Activated CD4-positive, alpha-beta T cell treated with anti-CD3 and anti-CD28 coated beads for 36 hours (primary cell): ENCODE measurements at regions of chr2 and their contacts with region 1.

Region 1: GRCh38 chr2:181104512-181105115 is 124.2 kb downstream of the UBE2E3 start:
- DNase-seq: no peak
- ATAC-seq: no peak
- H3K4me3 Mint-ChIP-seq: peak overlapping the region; percentile 2
- H3K27ac Mint-ChIP-seq: no peak overlapping the region
- H3K4me1 Mint-ChIP-seq: peaks cover 45% of the 10 kb centered on the region
- H3K27me3 Mint-ChIP-seq: no peaks in the 10 kb centered on the region

Region 2: DNA sequence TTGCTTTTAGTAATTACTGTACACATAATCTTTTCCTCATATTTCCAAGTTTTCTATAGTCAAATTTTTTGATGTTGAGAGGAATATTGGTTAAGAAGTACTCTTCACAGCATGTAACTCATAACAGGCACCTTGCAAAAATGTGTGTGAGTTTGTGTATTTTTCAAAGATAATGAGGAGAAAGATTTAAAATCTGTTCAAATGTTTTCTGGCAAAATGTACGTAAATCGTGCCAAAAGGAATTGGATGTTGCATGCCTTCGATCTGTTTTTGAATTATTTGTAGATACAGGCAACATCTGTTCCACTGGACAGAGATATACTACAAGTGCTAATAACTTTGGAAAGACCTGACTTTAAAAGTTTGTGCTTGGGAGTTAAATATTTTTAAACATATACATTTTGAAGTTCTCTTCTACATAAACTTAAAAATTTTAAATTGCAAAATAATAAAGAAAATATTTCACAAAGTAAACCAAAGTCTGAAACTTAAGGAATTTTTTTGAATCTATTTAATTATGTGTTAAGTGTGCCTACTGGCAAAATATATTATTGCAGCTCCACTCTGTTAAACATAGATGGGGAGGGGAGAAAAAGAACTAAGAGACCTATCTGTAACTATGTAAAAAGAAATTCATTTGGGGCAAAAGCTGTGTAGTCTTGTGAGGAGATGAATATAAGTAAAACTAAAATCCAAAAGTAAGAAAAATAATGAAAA is 257.7 kb before region 1 on chr2:
- CTCF ChIA-PET with region 1: no interaction called
- POLR2A ChIA-PET with region 1: no interaction called
- intact Hi-C with region 1: no loop called
- DNase-seq: no peak
- ATAC-seq: no peak
- H3K4me3 Mint-ChIP-seq: no peak overlapping the region
- H3K27ac Mint-ChIP-seq: no peak overlapping the region
- H3K4me1 Mint-ChIP-seq: no peaks in the 10 kb centered on the region
- H3K27me3 Mint-ChIP-seq: no peaks in the 10 kb centered on the region

Region 3: DNA sequence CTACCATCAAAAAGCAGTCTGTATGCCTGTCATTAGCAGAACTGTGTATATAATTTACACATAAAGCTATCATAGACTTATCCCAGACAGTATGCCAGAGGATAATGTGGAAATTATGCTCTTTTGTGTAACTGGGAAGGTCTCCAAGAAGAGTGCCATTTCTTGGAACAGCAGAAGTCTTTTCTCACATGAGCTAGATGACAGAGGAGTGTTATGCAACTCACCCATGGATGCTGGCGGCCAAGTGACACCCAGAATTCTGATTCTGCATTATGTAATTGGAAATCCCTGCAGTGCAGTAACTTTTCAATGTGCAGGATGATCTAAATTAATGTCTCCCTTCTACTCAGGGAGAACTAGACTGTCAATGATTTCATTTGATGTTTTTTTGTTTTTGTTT is 35.8 kb after region 1 on chr2:
- CTCF ChIA-PET with region 1: interaction called, 5 read pairs
- POLR2A ChIA-PET with region 1: no interaction called
- intact Hi-C with region 1: loop called (anchors 1 to 2 kb)
- DNase-seq: no peak
- ATAC-seq: no peak
- H3K4me3 Mint-ChIP-seq: peak overlapping the region; percentile 64
- H3K27ac Mint-ChIP-seq: no peak overlapping the region
- H3K4me1 Mint-ChIP-seq: peaks cover 58% of the 10 kb centered on the region
- H3K27me3 Mint-ChIP-seq: no peaks in the 10 kb centered on the region

Region 4: GRCh38 chr2:181223234-181223633 is 118.6 kb after region 1 on chr2:
- CTCF ChIA-PET with region 1: interaction called, 5 read pairs
- POLR2A ChIA-PET with region 1: no interaction called
- intact Hi-C with region 1: loop called (anchors 1 to 2 kb)
- DNase-seq: no peak
- ATAC-seq: peak; percentile 42
- H3K4me3 Mint-ChIP-seq: no peak overlapping the region
- H3K27ac Mint-ChIP-seq: peak overlapping the region; percentile 79
- H3K4me1 Mint-ChIP-seq: peaks cover 19% of the 10 kb centered on the region
- H3K27me3 Mint-ChIP-seq: no peaks in the 10 kb centered on the region

Region 5: GRCh38 chr2:181457121-181457740 is 352.6 kb after region 1 on chr2 and contains the start of gene ITGA4:
- CTCF ChIA-PET with region 1: interaction called, 5 read pairs
- POLR2A ChIA-PET with region 1: interaction called, 3 read pairs
- intact Hi-C with region 1: loop called (anchors 1 to 2 kb)
- DNase-seq: peak; percentile 93
- ATAC-seq: peak; percentile 86
- H3K4me3 Mint-ChIP-seq: peak within 1 kb of the TSS; percentile 91
- H3K27ac Mint-ChIP-seq: peak within 1 kb of the TSS; percentile 95
- H3K4me1 Mint-ChIP-seq: peaks cover 53% of the 10 kb centered on the region
- H3K27me3 Mint-ChIP-seq: no peaks in the 10 kb centered on the region
- total RNA-seq, gene ITGA4: 27.7 to 33.6 TPM

Region 6: DNA sequence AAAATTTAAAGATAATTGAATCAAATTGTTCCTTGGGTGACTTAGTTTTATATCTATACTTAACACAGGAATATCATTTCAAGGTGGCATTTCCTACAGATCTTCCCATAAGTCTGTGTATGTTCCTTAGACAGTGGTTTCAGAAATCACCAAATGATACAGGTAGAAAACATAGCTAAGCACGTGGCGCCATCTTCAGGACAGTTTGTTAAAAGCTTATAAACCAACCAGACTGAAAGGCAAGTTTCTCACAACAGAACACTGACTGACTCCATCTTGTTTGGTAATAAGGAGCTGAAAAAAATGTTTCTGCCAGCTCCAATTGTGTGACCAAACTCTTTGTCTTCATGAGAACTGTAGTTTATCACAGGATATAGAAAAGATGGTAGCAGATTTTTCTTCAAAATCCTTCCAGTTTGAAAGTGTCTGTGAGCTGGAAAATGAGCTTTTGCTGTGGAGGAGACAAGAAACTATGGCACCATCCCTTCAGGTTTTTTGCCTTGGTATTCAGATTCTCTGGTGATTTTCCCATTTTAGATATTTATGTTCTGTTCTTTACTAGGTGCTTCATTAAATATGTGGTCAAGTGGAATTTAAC is 610.5 kb after region 1 on chr2:
- CTCF ChIA-PET with region 1: interaction called, 11 read pairs
- POLR2A ChIA-PET with region 1: no interaction called
- intact Hi-C with region 1: loop called (anchors 1 kb)
- DNase-seq: peak; percentile 84
- ATAC-seq: peak; percentile 71
- H3K4me3 Mint-ChIP-seq: no peak overlapping the region
- H3K27ac Mint-ChIP-seq: no peak overlapping the region
- H3K4me1 Mint-ChIP-seq: no peaks in the 10 kb centered on the region
- H3K27me3 Mint-ChIP-seq: no peaks in the 10 kb centered on the region

Region 7: DNA sequence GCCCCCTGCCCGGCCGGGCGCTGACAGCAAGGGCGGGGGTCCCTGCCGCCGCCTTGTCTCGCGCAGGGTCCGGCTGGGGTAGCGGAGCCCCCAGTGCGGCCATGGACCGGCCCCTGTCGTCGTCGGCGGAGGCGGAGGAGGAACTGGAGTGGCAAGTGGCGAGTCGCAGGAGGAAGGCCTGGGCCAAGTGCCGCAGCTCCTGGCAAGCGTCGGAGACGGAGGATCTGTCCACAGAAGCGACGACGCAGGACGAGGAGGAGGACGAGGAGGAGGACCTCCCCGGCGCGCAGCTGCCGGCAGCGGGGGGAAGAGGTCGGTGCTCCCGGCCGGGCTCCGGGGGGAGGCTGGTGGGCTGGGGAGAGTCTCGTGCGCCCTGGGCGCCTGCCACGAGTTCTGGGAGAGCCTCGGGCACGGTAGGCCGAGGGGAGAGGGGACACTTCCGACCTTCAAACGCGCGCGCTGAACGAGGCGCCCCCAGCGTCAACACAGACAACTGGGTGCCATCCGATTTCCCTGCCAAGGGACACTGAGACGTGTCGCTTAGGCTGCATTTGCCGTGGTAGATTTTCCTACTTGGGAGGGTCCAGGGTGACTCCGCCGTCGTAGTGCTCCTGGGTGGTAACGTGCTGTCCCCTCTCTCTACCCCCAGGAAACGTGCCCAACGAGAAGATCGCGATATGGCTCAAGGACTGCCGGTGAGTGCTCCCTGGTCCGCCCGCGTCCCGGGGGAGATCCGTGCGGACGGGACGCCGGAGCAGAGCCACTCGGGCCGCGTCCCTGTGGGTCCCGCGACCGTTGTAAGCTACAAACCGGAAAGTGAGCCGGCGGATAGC is 787.6 kb after region 1 on chr2:
- CTCF ChIA-PET with region 1: no interaction called
- POLR2A ChIA-PET with region 1: no interaction called
- intact Hi-C with region 1: no loop called
- DNase-seq: peak; percentile 78
- ATAC-seq: peak; percentile 70
- H3K4me3 Mint-ChIP-seq: peak overlapping the region; percentile 87
- H3K27ac Mint-ChIP-seq: peak overlapping the region; percentile 79
- H3K4me1 Mint-ChIP-seq: peaks cover 35% of the 10 kb centered on the region
- H3K27me3 Mint-ChIP-seq: peaks cover 6% of the 10 kb centered on the region

Region 8: GRCh38 chr2:181904022-181904632 is 799.5 kb after region 1 on chr2:
- CTCF ChIA-PET with region 1: no interaction called
- POLR2A ChIA-PET with region 1: no interaction called
- intact Hi-C with region 1: loop called in 1 of 2 experiments (anchors 10 kb)
- DNase-seq: no peak
- ATAC-seq: no peak
- H3K4me3 Mint-ChIP-seq: no peak overlapping the region
- H3K27ac Mint-ChIP-seq: no peak overlapping the region
- H3K4me1 Mint-ChIP-seq: peaks cover 21% of the 10 kb centered on the region
- H3K27me3 Mint-ChIP-seq: no peaks in the 10 kb centered on the region